Activated CD8-positive, alpha-beta T cell treated with anti-CD3 and anti-CD28 coated beads for 36 hours (primary cell): ENCODE measurements at regions of chr2 and their contacts with region 1.

Region 1: GRCh38 chr2:218979846-218980734 is 4.9 kb downstream of the FEV start:
- DNase-seq: peak; percentile 93
- ATAC-seq: peak; percentile 90
- H3K4me3 Mint-ChIP-seq: peak overlapping the region; percentile 58
- H3K27ac Mint-ChIP-seq: no peak overlapping the region
- H3K4me1 Mint-ChIP-seq: peaks cover 21% of the 10 kb centered on the region
- H3K27me3 Mint-ChIP-seq: peaks cover 63% of the 10 kb centered on the region
- CTCF ChIP-seq: peak; percentile 98

Region 2: DNA sequence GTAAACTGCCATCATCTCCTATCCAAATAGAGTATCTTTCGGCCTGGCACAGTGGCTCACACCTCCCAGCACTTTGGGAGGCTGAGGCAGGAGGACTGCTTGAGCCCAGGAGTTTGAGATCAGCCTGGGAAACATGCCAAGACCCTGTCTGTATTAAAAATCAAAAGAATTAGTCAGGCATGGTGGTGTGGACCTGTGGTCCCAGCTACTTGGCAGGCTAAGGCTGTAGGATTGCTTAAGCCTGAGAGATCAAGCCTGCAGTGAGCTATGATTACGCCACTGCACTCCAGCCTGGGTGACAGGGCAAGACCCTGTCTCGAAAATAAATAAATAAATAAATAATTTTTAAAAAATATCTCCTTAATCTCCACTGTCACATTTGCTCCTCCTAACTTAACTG is 777.8 kb before region 1 on chr2:
- CTCF ChIA-PET with region 1: no interaction called
- POLR2A ChIA-PET with region 1: no interaction called
- intact Hi-C with region 1: no loop called
- DNase-seq: no peak
- ATAC-seq: no peak
- H3K4me3 Mint-ChIP-seq: no peak overlapping the region
- H3K27ac Mint-ChIP-seq: no peak overlapping the region
- H3K4me1 Mint-ChIP-seq: no peaks in the 10 kb centered on the region
- H3K27me3 Mint-ChIP-seq: no peaks in the 10 kb centered on the region
- CTCF ChIP-seq: no peak

Region 3: GRCh38 chr2:218777276-218777990 is 202.7 kb before region 1 on chr2:
- CTCF ChIA-PET with region 1: no interaction called
- POLR2A ChIA-PET with region 1: no interaction called
- intact Hi-C with region 1: no loop called
- DNase-seq: no peak
- ATAC-seq: no peak
- H3K4me3 Mint-ChIP-seq: no peak overlapping the region
- H3K27ac Mint-ChIP-seq: no peak overlapping the region
- H3K4me1 Mint-ChIP-seq: peaks cover 5% of the 10 kb centered on the region
- H3K27me3 Mint-ChIP-seq: peaks cover 25% of the 10 kb centered on the region
- CTCF ChIP-seq: no peak

Region 4: DNA sequence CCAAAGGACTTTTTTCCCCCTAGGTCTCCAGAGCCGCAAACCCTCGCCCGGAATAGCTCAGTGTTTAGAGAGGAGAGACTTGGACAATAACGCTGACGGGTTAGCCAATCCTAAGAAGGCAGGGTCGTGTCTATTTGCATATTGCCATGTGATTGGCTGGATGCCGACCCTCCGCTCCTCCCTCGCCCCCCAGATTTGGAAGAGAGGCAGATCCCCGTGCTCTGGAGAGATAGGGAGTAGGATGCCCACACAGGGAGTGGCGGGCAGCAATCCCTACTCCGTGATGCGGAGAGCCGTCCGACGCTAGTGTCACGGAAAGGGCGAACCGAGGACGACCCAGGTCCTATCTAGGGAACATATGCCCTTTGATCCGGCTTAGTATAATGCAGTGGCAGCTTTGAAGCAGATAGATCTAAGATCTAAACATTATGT is 119.1 kb before region 1 on chr2:
- CTCF ChIA-PET with region 1: interaction called, 4 read pairs
- POLR2A ChIA-PET with region 1: no interaction called
- intact Hi-C with region 1: loop called (anchors 5 kb)
- DNase-seq: peak; percentile 21
- ATAC-seq: peak; percentile 35
- H3K4me3 Mint-ChIP-seq: no peak overlapping the region
- H3K27ac Mint-ChIP-seq: no peak overlapping the region
- H3K4me1 Mint-ChIP-seq: peaks cover 10% of the 10 kb centered on the region
- H3K27me3 Mint-ChIP-seq: peaks cover 68% of the 10 kb centered on the region
- CTCF ChIP-seq: no peak

Region 5: DNA sequence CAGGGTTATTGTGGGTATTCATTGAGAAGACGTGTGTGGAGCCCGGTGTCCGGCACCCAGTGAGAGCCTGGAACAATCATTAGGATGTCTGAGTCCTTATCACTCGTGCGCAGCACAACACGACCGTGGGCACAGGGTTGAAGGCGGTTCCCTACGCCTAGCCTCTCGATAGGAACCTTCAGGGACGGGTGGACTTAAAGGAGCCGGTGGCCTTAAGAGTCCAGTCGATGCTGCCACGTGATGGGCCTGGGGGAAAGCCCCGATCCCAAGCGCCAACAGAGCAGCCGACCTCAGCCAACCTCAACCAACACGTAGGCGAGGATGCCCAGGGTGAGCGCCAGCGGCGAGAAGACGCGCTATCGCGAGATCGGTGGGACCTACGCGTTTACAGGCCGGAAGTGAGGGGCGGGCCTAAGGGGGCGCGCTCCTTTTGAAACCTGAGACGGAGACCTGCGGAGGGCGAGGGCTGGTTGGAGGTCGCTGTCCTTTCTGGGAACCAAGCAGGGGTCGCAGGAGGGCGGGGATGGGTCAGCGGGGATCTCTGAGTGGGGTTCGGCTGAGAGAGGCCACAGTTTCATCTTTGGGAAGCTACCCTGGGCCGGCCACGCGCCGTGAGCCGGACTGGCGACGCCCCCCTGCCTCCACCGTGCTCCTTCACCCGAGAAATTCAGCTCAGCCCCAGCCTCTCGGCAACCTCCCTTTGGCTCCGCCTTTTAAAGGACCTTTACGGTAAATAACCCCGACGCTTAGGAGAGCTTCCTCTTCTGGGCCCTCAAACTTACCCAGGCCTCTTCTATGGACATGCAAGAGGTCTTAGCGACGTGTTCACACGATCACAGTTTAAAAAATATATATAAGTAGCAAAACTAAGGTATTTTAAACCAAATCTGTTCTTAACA is 71.1 kb before region 1 on chr2:
- CTCF ChIA-PET with region 1: interaction called, 13 read pairs
- POLR2A ChIA-PET with region 1: no interaction called
- intact Hi-C with region 1: no loop called
- DNase-seq: peak; percentile 97
- ATAC-seq: peak; percentile 97
- H3K4me3 Mint-ChIP-seq: peak overlapping the region; percentile 87
- H3K27ac Mint-ChIP-seq: peak overlapping the region; percentile 88
- H3K4me1 Mint-ChIP-seq: peaks cover 9% of the 10 kb centered on the region
- H3K27me3 Mint-ChIP-seq: peaks cover 17% of the 10 kb centered on the region
- CTCF ChIP-seq: no peak

Region 6: GRCh38 chr2:219002395-219003266 is 22.5 kb after region 1 on chr2:
- CTCF ChIA-PET with region 1: interaction called, 20 read pairs
- POLR2A ChIA-PET with region 1: no interaction called
- intact Hi-C with region 1: no loop called
- DNase-seq: peak; percentile 77
- ATAC-seq: peak; percentile 47
- H3K4me3 Mint-ChIP-seq: peak overlapping the region; percentile 66
- H3K27ac Mint-ChIP-seq: no peak overlapping the region
- H3K4me1 Mint-ChIP-seq: peaks cover 11% of the 10 kb centered on the region
- H3K27me3 Mint-ChIP-seq: peaks cover 62% of the 10 kb centered on the region
- CTCF ChIP-seq: peak; percentile 46

Region 7: GRCh38 chr2:219057709-219058540 is 77.8 kb after region 1 on chr2:
- CTCF ChIA-PET with region 1: interaction called, 18 read pairs
- POLR2A ChIA-PET with region 1: no interaction called
- intact Hi-C with region 1: no loop called
- DNase-seq: peak; percentile 84
- ATAC-seq: peak; percentile 97
- H3K4me3 Mint-ChIP-seq: peak overlapping the region; percentile 36
- H3K27ac Mint-ChIP-seq: no peak overlapping the region
- H3K4me1 Mint-ChIP-seq: peaks cover 19% of the 10 kb centered on the region
- H3K27me3 Mint-ChIP-seq: peaks cover 60% of the 10 kb centered on the region
- CTCF ChIP-seq: peak; percentile 97

Region 8: DNA sequence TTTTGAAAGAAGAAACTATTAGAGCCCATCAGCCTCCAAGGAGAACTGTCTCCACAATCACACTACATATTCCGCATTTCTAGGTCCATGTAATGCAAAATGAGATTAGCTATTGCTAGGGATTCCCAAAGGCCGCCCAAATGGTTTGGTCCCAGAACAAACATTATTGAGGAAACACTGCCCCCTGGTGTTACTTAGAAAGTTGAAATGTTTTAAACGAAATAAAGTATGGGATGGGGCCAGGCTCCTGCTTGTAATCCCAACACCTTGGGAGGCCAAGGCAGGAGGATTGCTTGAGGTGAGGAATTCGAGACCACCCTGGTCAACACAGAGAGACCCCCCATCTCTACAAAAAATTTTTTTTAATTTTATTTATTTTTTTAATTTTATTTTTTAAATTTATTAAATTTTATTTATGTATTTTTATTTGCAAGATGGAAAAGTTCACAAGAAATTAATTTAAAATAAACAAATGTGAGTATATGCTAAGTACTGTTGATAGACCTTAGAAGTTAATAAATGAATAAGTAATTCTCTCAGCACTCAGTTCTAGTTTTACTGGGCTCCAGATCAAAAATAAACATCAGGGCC is 175.1 kb after region 1 on chr2:
- CTCF ChIA-PET with region 1: interaction called, 29 read pairs
- POLR2A ChIA-PET with region 1: no interaction called
- intact Hi-C with region 1: no loop called
- DNase-seq: peak; percentile 36
- ATAC-seq: peak; percentile 37
- H3K4me3 Mint-ChIP-seq: no peak overlapping the region
- H3K27ac Mint-ChIP-seq: no peak overlapping the region
- H3K4me1 Mint-ChIP-seq: peaks cover 9% of the 10 kb centered on the region
- H3K27me3 Mint-ChIP-seq: no peaks in the 10 kb centered on the region
- CTCF ChIP-seq: peak; percentile 81

Region 9: DNA sequence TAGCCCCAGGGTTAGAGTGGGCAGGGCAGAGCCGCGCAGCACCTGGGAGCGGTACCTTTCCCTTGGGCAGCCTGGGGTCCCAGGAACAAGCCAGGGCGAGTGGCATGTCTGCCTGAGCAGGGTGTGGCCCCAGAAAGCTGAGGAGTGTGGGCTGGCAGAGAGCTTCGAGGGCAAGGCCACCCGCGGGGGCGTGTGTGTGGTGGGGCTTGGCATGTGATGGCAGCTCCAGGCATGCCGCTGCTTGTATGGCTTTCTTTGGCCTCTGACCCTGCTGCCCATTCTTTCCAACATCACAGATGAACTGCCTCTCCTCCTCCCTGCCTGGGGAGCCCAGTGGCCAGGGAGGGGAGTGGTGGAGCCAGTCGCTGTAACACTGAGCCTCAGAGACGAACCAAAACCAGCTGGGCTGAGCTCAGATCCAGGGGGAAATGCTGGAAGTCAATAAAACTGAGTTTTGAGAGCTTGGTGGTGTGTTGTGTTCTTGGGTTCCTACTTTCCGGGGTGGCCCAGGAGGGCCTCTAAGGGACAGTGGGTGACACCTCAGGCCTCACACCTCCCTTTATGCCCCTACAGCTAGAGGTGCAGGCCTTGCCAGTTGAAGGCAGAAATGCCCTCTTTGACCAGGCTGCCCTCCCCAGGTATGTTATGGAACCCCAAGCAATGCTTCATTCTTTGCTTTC is 306.5 kb after region 1 on chr2:
- CTCF ChIA-PET with region 1: no interaction called
- POLR2A ChIA-PET with region 1: no interaction called
- intact Hi-C with region 1: no loop called
- DNase-seq: no peak
- ATAC-seq: no peak
- H3K4me3 Mint-ChIP-seq: no peak overlapping the region
- H3K27ac Mint-ChIP-seq: peak overlapping the region; percentile 52
- H3K4me1 Mint-ChIP-seq: peaks cover 22% of the 10 kb centered on the region
- H3K27me3 Mint-ChIP-seq: no peaks in the 10 kb centered on the region
- CTCF ChIP-seq: no peak

Region 10: DNA sequence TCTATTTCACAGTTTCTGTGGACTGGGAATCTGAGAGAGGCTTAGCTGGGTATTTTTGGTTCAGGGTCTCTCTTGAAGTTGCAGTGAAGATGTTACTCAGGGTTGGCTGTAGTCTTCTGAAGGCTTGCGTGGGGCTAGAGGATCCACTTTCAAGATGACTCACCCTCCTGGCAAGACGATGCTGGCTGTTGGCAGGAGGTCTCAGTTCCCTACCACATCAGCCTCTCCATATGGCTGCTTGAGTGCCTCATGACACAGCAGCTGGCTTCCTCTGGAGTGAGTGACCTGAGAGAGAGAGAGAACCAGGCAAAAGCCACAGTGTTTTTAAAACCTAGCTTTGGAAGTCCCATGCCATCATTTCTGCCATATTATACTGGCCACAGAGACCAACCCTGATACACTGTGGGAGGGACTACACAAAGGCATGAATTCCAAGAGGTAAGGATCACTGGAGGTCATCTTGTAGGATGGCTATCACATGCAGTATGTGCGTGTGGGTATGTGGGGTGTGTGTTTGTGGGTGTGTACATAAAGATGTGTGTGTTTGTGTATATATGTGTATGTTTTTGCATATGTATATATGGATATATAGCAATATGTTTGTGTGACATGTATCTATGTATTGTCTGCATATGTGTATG is 382.6 kb after region 1 on chr2:
- CTCF ChIA-PET with region 1: no interaction called
- POLR2A ChIA-PET with region 1: no interaction called
- intact Hi-C with region 1: no loop called
- DNase-seq: peak; percentile 37
- ATAC-seq: peak; percentile 60
- H3K4me3 Mint-ChIP-seq: no peak overlapping the region
- H3K27ac Mint-ChIP-seq: no peak overlapping the region
- H3K4me1 Mint-ChIP-seq: peaks cover 9% of the 10 kb centered on the region
- H3K27me3 Mint-ChIP-seq: peaks cover 16% of the 10 kb centered on the region
- CTCF ChIP-seq: no peak